Mammary epithelial cell (primary cell): ENCODE measurements at regions of chr20 and their contacts with region 1.

Region 1: GRCh38 chr20:25399037-25399430 is 8.4 kb upstream of the ABHD12 start:
- DNase-seq: peak; percentile 65
- H3K4me3 ChIP-seq: no peak overlapping the region
- H3K27ac ChIP-seq: no peak overlapping the region
- H3K4me1 ChIP-seq: no peaks in the 10 kb centered on the region
- H3K27me3 ChIP-seq: no peaks in the 10 kb centered on the region
- CTCF ChIP-seq: peak; percentile 54 to 60

Region 2: DNA sequence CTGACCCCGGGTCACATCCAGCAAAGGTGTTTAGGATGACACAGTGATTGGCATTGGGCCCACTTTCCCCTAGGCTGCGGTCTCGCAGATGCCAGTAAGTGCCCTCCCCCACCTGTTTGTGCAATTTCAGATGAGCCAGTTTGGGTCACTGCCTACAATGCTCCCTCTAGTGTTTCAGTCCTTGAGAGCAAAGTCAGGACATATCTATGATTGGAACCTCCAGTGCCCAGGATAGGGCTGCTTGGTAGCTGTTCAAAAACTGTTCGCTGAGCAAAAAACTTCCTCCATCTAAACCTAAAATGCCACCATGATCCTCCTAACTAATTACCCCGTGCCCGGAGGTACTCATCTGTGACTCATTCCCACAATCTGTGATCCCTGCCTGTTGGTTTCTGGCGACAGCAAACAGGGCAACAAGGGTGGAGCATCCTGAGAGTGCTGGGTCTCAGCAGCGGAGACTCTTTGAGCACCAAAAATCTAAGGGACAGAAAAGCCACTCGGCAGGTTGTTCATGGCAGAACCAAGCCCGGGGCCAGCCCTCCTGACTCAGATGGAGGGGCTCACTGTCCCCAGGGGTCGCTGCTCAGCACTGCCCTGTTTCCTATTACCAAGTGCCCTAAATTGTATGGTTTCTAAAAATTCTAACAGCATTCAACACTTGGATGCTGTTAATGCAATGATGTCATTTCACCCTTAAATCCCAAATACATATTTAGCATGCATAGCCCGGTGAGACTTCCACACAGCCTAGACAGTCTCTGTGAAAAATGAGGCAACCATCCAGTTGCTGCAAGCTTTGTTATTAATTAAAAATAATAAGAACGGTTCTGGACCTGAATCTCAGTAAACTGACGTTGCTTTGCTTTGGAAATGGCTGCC is 322.1 kb before region 1 on chr20:
- CTCF ChIA-PET with region 1: no interaction called
- dilution Hi-C with region 1: no loop called
- in situ Hi-C with region 1: loop called (anchors 25 kb)
- intact Hi-C with region 1: loop called (anchors 5 kb)
- DNase-seq: peak; percentile 65
- H3K4me3 ChIP-seq: peak overlapping the region in 1 of 3 experiments; percentile 8
- H3K27ac ChIP-seq: no peak overlapping the region
- H3K4me1 ChIP-seq: peaks cover 25% of the 10 kb centered on the region
- H3K27me3 ChIP-seq: peaks cover 17% of the 10 kb centered on the region
- CTCF ChIP-seq: peak; percentile 30 to 58

Region 3: GRCh38 chr20:25294459-25295385 is 104.3 kb before region 1 on chr20:
- CTCF ChIA-PET with region 1: interaction called, 3 read pairs
- dilution Hi-C with region 1: no loop called
- in situ Hi-C with region 1: no loop called
- intact Hi-C with region 1: loop called (anchors 1 kb)
- DNase-seq: no peak
- H3K4me3 ChIP-seq: no peak overlapping the region
- H3K27ac ChIP-seq: no peak overlapping the region
- H3K4me1 ChIP-seq: peaks cover 62% of the 10 kb centered on the region
- H3K27me3 ChIP-seq: no peaks in the 10 kb centered on the region
- CTCF ChIP-seq: peak; percentile 54 to 64

Region 4: GRCh38 chr20:25299806-25300205 is 99.2 kb before region 1 on chr20:
- CTCF ChIA-PET with region 1: interaction called, 3 read pairs
- dilution Hi-C with region 1: no loop called
- in situ Hi-C with region 1: loop called in 1 of 2 experiments (anchors 5 kb)
- intact Hi-C with region 1: loop called (anchors 1 kb)
- DNase-seq: peak; percentile 59
- H3K4me3 ChIP-seq: no peak overlapping the region
- H3K27ac ChIP-seq: no peak overlapping the region
- H3K4me1 ChIP-seq: peaks cover 47% of the 10 kb centered on the region
- H3K27me3 ChIP-seq: no peaks in the 10 kb centered on the region
- CTCF ChIP-seq: peak in 1 of 2 donors; percentile 12

Region 5: GRCh38 chr20:25336561-25337422 is 62.2 kb before region 1 on chr20:
- CTCF ChIA-PET with region 1: interaction called, 18 read pairs
- dilution Hi-C with region 1: no loop called
- in situ Hi-C with region 1: no loop called
- intact Hi-C with region 1: loop called (anchors 1 kb)
- DNase-seq: peak; percentile 76
- H3K4me3 ChIP-seq: no peak overlapping the region
- H3K27ac ChIP-seq: no peak overlapping the region
- H3K4me1 ChIP-seq: peaks cover 3% of the 10 kb centered on the region
- H3K27me3 ChIP-seq: no peaks in the 10 kb centered on the region
- CTCF ChIP-seq: peak; percentile 67 to 89

Region 6: GRCh38 chr20:26208296-26209091 is 809.5 kb after region 1 on chr20:
- CTCF ChIA-PET with region 1: no interaction called
- dilution Hi-C with region 1: no loop called
- in situ Hi-C with region 1: no loop called
- intact Hi-C with region 1: no loop called
- DNase-seq: peak; percentile 2
- H3K4me3 ChIP-seq: no peak overlapping the region
- H3K27ac ChIP-seq: no peak overlapping the region
- H3K4me1 ChIP-seq: no peaks in the 10 kb centered on the region
- H3K27me3 ChIP-seq: peaks cover 15% of the 10 kb centered on the region
- CTCF ChIP-seq: no peak